Lower leg skin (tissue), 4 donors: ENCODE measurements at regions of chr12 and their contacts with region 1.

Region 1: DNA sequence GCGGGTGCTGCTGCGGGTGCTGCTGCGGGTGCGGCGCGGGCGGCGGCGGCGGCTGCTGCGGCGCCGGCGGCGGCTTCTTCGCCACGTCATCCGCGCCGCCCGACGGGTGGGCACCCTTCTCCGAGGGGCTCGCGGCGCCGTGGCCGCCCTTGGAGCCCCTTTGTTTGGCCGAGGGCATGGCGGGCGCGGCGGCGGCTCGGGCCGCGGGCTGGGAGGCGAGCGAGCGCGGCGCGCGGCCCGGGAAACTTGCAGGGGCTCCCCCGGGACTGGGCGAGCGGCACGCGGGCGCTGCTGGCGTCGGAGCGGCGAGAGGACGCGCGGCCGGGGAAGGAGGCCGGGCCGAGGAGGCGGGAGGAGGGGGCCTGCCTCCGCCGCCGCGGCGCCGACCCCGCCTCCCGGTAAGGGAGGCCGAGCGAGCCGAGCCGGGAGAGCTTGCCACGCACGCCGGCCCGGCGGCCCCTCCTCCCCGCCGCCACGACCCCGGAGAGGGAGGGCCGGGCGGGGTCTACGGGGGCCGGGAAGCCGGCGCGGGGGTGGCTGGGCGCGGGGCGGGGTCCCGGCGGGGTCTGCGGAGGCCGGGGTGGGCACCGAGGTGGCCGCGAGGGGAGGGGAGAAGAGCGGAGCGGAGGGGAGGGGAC is at the start of gene CKAP4:
- DNase-seq: peak; percentile 45 to 94
- H3K4me3 ChIP-seq: peak within 1 kb of the TSS; percentile 66
- CTCF ChIP-seq: no peak
- POLR2A ChIP-seq: no peak
- total RNA-seq, gene CKAP4: 57.2 to 80.3 (median 73.6) TPM

Region 2: GRCh38 chr12:106357549-106358395 is 110.0 kb after region 1 on chr12 and contains the start of gene POLR3B:
- intact Hi-C with region 1: loop called (anchors 10 kb)
- DNase-seq: peak; percentile 95 to 99
- H3K4me3 ChIP-seq: peak within 1 kb of the TSS; percentile 32
- CTCF ChIP-seq: peak in 1 of 3 donors; percentile 76
- POLR2A ChIP-seq: no peak
- total RNA-seq, gene POLR3B: 9.4 to 12.9 (median 12.1) TPM